Natural killer cell (primary cell): ENCODE measurements at regions of chr7 and their contacts with region 1.

Region 1: GRCh38 chr7:35801392-35802101 is 690 bp downstream of the SEPTIN7 start:
- DNase-seq: peak; percentile 81 to 85
- ATAC-seq: peak; percentile 31 to 52 (median 50)
- H3K4me3 ChIP-seq: peak overlapping the region; percentile 83
- H3K4me3 Mint-ChIP-seq: peak overlapping the region; percentile 98
- H3K27ac ChIP-seq: peak overlapping the region; percentile 96
- H3K27ac Mint-ChIP-seq: peak overlapping the region; percentile 97 to 98
- H3K4me1 ChIP-seq: peaks cover 23% of the 10 kb centered on the region
- H3K4me1 Mint-ChIP-seq: peaks cover 54 to 58% of the 10 kb centered on the region in 2 donors
- H3K27me3 ChIP-seq: no peaks in the 10 kb centered on the region
- H3K27me3 Mint-ChIP-seq: no peaks in the 10 kb centered on the region
- CTCF ChIP-seq: no peak

Region 2: GRCh38 chr7:35707422-35707821 is 94.1 kb before region 1 on chr7:
- intact Hi-C with region 1: loop called (anchors 1 kb)
- DNase-seq: no peak
- ATAC-seq: no peak
- H3K4me3 ChIP-seq: no peak overlapping the region
- H3K4me3 Mint-ChIP-seq: no peak overlapping the region
- H3K27ac ChIP-seq: no peak overlapping the region
- H3K27ac Mint-ChIP-seq: no peak overlapping the region
- H3K4me1 ChIP-seq: peaks cover 12% of the 10 kb centered on the region
- H3K4me1 Mint-ChIP-seq: peaks cover 21 to 23% of the 10 kb centered on the region in 2 donors
- H3K27me3 ChIP-seq: no peaks in the 10 kb centered on the region
- H3K27me3 Mint-ChIP-seq: no peaks in the 10 kb centered on the region
- CTCF ChIP-seq: no peak

Region 3: GRCh38 chr7:35828817-35829216 is 27.3 kb after region 1 on chr7:
- intact Hi-C with region 1: no loop called
- DNase-seq: no peak
- ATAC-seq: no peak
- H3K4me3 ChIP-seq: no peak overlapping the region
- H3K4me3 Mint-ChIP-seq: no peak overlapping the region
- H3K27ac ChIP-seq: no peak overlapping the region
- H3K27ac Mint-ChIP-seq: peak overlapping the region; percentile 62 to 65
- H3K4me1 ChIP-seq: peaks cover 10% of the 10 kb centered on the region
- H3K4me1 Mint-ChIP-seq: peaks cover 56% of the 10 kb centered on the region in 2 donors
- H3K27me3 ChIP-seq: no peaks in the 10 kb centered on the region
- H3K27me3 Mint-ChIP-seq: no peaks in the 10 kb centered on the region
- CTCF ChIP-seq: no peak

Region 4: DNA sequence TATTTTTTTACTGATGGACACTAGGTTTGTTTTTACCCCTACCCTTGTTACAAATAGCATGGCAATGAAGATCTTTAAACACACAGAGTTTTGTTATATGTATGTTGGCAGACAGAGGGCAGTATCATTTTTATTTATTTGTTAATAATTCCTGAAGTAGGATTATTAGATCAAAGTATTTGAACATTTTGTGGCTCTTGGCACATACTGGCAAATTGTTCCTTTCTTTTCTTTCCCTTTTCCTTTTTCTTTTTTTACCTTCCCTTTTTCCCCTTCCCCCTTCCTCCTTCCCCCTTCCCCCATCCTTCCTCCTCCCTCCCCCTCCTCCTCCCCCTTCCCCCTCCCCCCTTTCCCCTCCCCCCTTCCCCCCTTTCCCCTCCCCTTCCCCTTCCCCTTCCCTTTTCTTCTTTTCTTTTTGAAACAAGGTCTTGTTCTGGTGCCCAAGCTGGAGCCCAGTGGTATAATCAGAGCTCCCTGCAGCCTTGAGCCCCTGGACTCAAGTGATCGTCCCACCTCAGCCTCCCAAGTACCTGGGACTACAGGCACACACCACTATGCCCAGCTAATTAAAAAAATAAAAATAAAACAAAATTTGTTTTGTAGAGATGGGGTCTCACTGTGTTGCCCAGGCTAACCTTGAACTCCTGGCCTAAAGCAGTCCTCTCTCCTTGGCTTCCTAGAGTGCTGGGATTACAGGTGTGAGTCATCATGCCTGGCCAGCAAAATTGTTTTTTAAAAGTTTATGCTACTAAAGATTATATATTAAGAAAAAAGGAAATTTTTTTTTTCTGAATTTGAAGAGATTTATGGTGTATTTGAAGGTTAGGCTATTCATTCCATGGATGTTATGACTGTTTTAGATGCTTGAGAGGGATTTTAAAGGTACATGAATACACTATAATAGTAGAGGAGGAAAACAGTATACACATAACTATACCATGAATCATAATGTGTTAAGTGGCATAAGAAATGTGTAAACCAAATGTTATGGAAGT is 38.6 kb after region 1 on chr7:
- intact Hi-C with region 1: loop called (anchors 5 kb)
- DNase-seq: no peak
- ATAC-seq: no peak
- H3K4me3 ChIP-seq: no peak overlapping the region
- H3K4me3 Mint-ChIP-seq: no peak overlapping the region
- H3K27ac ChIP-seq: no peak overlapping the region
- H3K27ac Mint-ChIP-seq: peak overlapping the region; percentile 67 to 71
- H3K4me1 ChIP-seq: peaks cover 3% of the 10 kb centered on the region
- H3K4me1 Mint-ChIP-seq: peaks cover 48 to 53% of the 10 kb centered on the region in 2 donors
- H3K27me3 ChIP-seq: no peaks in the 10 kb centered on the region
- H3K27me3 Mint-ChIP-seq: no peaks in the 10 kb centered on the region
- CTCF ChIP-seq: no peak